Naive thymus-derived CD4-positive, alpha-beta T cell (primary cell): ENCODE measurements at regions of chr6 and their contacts with region 1.

Region 1: DNA sequence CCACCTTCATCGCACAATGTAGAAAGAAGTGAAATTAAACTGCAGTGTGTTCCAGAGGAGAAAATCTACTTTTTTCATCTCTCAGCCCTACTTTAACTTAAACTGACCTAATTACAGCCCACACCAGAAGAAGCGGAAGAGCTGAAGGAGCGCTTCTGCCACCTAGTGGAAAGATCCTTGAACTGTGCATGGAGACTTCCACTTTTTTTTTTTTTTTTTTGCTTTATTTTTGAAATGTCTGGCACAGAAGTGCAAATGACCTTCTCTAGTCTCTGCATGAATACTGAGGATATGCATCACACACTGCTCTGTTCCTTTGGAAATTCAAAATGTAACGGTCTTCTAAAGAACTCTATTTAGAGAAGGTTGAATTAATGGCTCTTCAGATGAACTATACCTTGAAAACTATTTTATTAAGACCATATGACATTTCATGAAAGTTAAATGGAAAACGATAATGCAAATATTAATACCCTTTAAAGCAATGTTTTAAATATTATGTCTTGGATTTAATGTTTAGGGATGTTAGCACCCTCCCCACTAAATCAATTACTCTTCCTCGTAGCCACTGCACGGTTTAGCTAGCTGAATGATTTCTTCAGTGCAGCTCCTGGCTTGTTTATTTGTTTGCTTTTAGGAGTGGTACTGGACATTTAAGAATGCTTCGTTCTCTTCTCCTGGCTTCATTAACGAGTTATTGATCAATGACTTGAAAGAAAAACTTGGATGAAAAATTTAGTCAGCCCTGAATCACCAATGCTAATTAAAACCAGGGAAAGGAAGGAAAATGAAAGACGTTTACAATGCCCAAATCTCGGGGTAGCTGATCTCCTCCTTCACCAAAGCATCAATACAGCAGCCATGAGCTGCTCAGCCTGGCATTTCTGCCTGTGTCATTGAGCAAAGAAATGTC is 569.6 kb upstream of the GJE1 start:
- DNase-seq: peak; percentile 30 to 78 (median 70)
- ATAC-seq: peak; percentile 94
- H3K4me3 ChIP-seq: peak overlapping the region; percentile 41
- H3K4me3 Mint-ChIP-seq: peak overlapping the region; percentile 62 to 95 (median 86)
- H3K27ac ChIP-seq: no peak overlapping the region
- H3K27ac Mint-ChIP-seq: peak overlapping the region in 8 of 9 donors; percentile 31 to 91 (median 75)
- H3K4me1 ChIP-seq: peaks cover 0 to 5% of the 10 kb centered on the region in 2 donors
- H3K4me1 Mint-ChIP-seq: peaks cover 11 to 23% (median 12%) of the 10 kb centered on the region in 7 donors
- H3K27me3 ChIP-seq: no peaks in the 10 kb centered on the region
- H3K27me3 Mint-ChIP-seq: peaks cover 0 to 10% (median 0%) of the 10 kb centered on the region in 5 donors

Region 2: GRCh38 chr6:139881728-139882211 is 1681.3 kb before region 1 on chr6:
- CTCF ChIA-PET with region 1: no interaction called
- POLR2A ChIA-PET with region 1: no interaction called
- intact Hi-C with region 1: loop called in 1 of 2 experiments (anchors 1 kb)
- DNase-seq: peak in 5 of 9 donors; percentile 7 to 20 (median 14)
- ATAC-seq: peak; percentile 58
- H3K4me3 ChIP-seq: no peak overlapping the region
- H3K4me3 Mint-ChIP-seq: peak overlapping the region in 3 of 10 donors; percentile 11 to 41 (median 34)
- H3K27ac ChIP-seq: no peak overlapping the region
- H3K27ac Mint-ChIP-seq: peak overlapping the region in 1 of 9 donors; percentile 22
- H3K4me1 ChIP-seq: no peaks in the 10 kb centered on the region
- H3K4me1 Mint-ChIP-seq: peaks cover 0 to 12% (median 2%) of the 10 kb centered on the region in 7 donors
- H3K27me3 ChIP-seq: no peaks in the 10 kb centered on the region
- H3K27me3 Mint-ChIP-seq: peaks cover 0 to 19% (median 13%) of the 10 kb centered on the region in 5 donors

Region 3: GRCh38 chr6:140586426-140587061 is 976.6 kb before region 1 on chr6:
- CTCF ChIA-PET with region 1: no interaction called
- POLR2A ChIA-PET with region 1: no interaction called
- intact Hi-C with region 1: loop called in 1 of 2 experiments (anchors 10 kb)
- DNase-seq: peak in 1 of 9 donors; percentile 35
- ATAC-seq: no peak
- H3K4me3 ChIP-seq: no peak overlapping the region
- H3K4me3 Mint-ChIP-seq: peak overlapping the region in 1 of 10 donors; percentile 53
- H3K27ac ChIP-seq: no peak overlapping the region
- H3K27ac Mint-ChIP-seq: peak overlapping the region in 2 of 9 donors; percentile 17 to 90
- H3K4me1 ChIP-seq: no peaks in the 10 kb centered on the region
- H3K4me1 Mint-ChIP-seq: peaks cover 0 to 47% (median 0%) of the 10 kb centered on the region in 7 donors
- H3K27me3 ChIP-seq: no peaks in the 10 kb centered on the region
- H3K27me3 Mint-ChIP-seq: peaks cover 0 to 5% (median 0%) of the 10 kb centered on the region in 5 donors

Region 4: GRCh38 chr6:140909625-140910024 is 653.5 kb before region 1 on chr6:
- CTCF ChIA-PET with region 1: no interaction called
- POLR2A ChIA-PET with region 1: no interaction called
- intact Hi-C with region 1: loop called in 1 of 2 experiments (anchors 5 kb)
- DNase-seq: no peak
- ATAC-seq: no peak
- H3K4me3 ChIP-seq: no peak overlapping the region
- H3K4me3 Mint-ChIP-seq: no peak overlapping the region
- H3K27ac ChIP-seq: no peak overlapping the region
- H3K27ac Mint-ChIP-seq: no peak overlapping the region
- H3K4me1 ChIP-seq: no peaks in the 10 kb centered on the region
- H3K4me1 Mint-ChIP-seq: no peaks in the 10 kb centered on the region
- H3K27me3 ChIP-seq: no peaks in the 10 kb centered on the region
- H3K27me3 Mint-ChIP-seq: peaks cover 0 to 6% (median 0%) of the 10 kb centered on the region in 5 donors

Region 5: GRCh38 chr6:141077355-141078333 is 485.5 kb before region 1 on chr6:
- CTCF ChIA-PET with region 1: no interaction called
- POLR2A ChIA-PET with region 1: no interaction called
- intact Hi-C with region 1: loop called in 1 of 2 experiments (anchors 5 kb)
- DNase-seq: peak in 2 of 9 donors; percentile 1 to 13
- ATAC-seq: no peak
- H3K4me3 ChIP-seq: no peak overlapping the region
- H3K4me3 Mint-ChIP-seq: no peak overlapping the region
- H3K27ac ChIP-seq: no peak overlapping the region
- H3K27ac Mint-ChIP-seq: no peak overlapping the region
- H3K4me1 ChIP-seq: no peaks in the 10 kb centered on the region
- H3K4me1 Mint-ChIP-seq: peaks cover 0 to 5% (median 0%) of the 10 kb centered on the region in 7 donors
- H3K27me3 ChIP-seq: no peaks in the 10 kb centered on the region
- H3K27me3 Mint-ChIP-seq: peaks cover 0 to 36% (median 3%) of the 10 kb centered on the region in 5 donors

Region 6: GRCh38 chr6:141403795-141404194 is 159.3 kb before region 1 on chr6:
- CTCF ChIA-PET with region 1: no interaction called
- POLR2A ChIA-PET with region 1: no interaction called
- intact Hi-C with region 1: loop called in 1 of 2 experiments (anchors 10 kb)
- DNase-seq: no peak
- ATAC-seq: no peak
- H3K4me3 ChIP-seq: no peak overlapping the region
- H3K4me3 Mint-ChIP-seq: no peak overlapping the region
- H3K27ac ChIP-seq: no peak overlapping the region
- H3K27ac Mint-ChIP-seq: no peak overlapping the region
- H3K4me1 ChIP-seq: no peaks in the 10 kb centered on the region
- H3K4me1 Mint-ChIP-seq: peaks cover 0 to 9% (median 3%) of the 10 kb centered on the region in 7 donors
- H3K27me3 ChIP-seq: no peaks in the 10 kb centered on the region
- H3K27me3 Mint-ChIP-seq: peaks cover 0 to 5% (median 4%) of the 10 kb centered on the region in 5 donors

Region 7: GRCh38 chr6:142112451-142113061 is 549.4 kb after region 1 on chr6:
- CTCF ChIA-PET with region 1: no interaction called
- POLR2A ChIA-PET with region 1: no interaction called
- intact Hi-C with region 1: loop called in 1 of 2 experiments (anchors 5 kb)
- DNase-seq: peak; percentile 10 to 45 (median 37)
- ATAC-seq: peak; percentile 61
- H3K4me3 ChIP-seq: no peak overlapping the region
- H3K4me3 Mint-ChIP-seq: no peak overlapping the region
- H3K27ac ChIP-seq: no peak overlapping the region
- H3K27ac Mint-ChIP-seq: no peak overlapping the region
- H3K4me1 ChIP-seq: no peaks in the 10 kb centered on the region
- H3K4me1 Mint-ChIP-seq: no peaks in the 10 kb centered on the region
- H3K27me3 ChIP-seq: no peaks in the 10 kb centered on the region
- H3K27me3 Mint-ChIP-seq: peaks cover 0 to 11% (median 6%) of the 10 kb centered on the region in 5 donors